ENCODE measurements at regions of chr5 and their contacts with region 1.

Region 1: GRCh38 chr5:17189381-17190036 is 27.9 kb upstream of the BASP1 start:
- DNase-seq: peak; percentile 70 to 75
- ATAC-seq: peak; percentile 51 to 86 (median 68)
- H3K4me3 ChIP-seq: no peak overlapping the region
- H3K27ac ChIP-seq: no peak overlapping the region
- H3K4me1 ChIP-seq: peaks cover 7 to 25% (median 13%) of the 10 kb centered on the region in 9 donors
- H3K27me3 ChIP-seq: peaks cover 0 to 4% (median 0%) of the 10 kb centered on the region in 7 donors
- CTCF ChIP-seq: peak; percentile 70 to 89 (median 84)

Region 2: GRCh38 chr5:16679863-16680262 is 509.6 kb before region 1 on chr5:
- intact Hi-C with region 1: loop called in 1 of 10 experiments (anchors 10 kb)
- DNase-seq: no peak
- ATAC-seq: no peak
- H3K4me3 ChIP-seq: no peak overlapping the region
- H3K27ac ChIP-seq: no peak overlapping the region
- H3K4me1 ChIP-seq: no peaks in the 10 kb centered on the region
- H3K27me3 ChIP-seq: no peaks in the 10 kb centered on the region
- CTCF ChIP-seq: no peak

Region 3: DNA sequence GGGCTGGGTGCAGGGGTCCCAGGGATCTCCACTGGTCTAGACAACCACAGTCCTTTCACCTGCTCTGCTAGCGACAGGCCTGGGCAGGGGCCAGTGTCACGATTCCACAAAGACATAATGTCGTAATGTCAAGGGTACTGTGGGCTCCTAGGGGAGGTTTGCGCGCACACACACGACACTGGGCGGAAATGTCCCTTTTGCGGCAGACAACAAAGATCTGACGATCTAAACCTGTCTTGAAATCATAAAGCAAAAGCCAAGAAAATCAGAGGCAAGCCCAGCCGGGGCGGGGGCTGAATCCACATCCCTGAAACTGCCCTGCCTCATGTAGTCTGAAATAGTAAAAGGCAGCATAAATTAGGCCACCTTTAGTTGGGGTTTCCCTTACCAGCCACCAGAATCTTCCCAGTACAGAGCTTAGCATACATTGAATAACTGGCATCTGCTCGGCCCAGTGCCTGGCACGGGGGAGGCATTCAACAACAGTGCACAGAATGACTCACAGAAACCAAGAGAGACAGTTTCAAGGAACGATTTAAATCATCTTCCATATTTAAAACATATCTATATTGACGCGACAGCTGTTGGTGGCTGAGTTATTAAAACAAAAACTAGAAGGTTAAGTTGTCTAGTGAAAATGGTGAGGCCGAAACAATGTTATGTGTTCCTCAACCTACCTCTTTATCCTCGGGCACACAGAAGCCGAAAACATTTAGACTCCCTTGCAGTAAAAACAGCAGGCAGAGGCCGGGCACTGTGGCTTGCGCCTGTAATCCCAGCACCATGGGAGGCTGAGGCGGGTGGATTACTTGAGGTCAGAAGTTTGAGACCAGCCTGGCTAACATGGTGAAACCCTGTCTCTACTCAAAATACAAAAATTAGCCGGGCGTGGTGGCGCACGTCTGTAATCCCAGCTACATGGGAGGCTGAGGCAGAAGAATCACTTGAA is 404.4 kb before region 1 on chr5:
- intact Hi-C with region 1: loop called in 6 of 10 experiments (anchors 2 to 5 kb)
- DNase-seq: no peak
- ATAC-seq: peak in 1 of 8 donors; percentile 22
- H3K4me3 ChIP-seq: no peak overlapping the region
- H3K27ac ChIP-seq: no peak overlapping the region
- H3K4me1 ChIP-seq: peaks cover 0 to 13% (median 0%) of the 10 kb centered on the region in 9 donors
- H3K27me3 ChIP-seq: no peaks in the 10 kb centered on the region
- CTCF ChIP-seq: no peak

Region 4: GRCh38 chr5:16871746-16872339 is 317.7 kb before region 1 on chr5:
- intact Hi-C with region 1: no loop called
- DNase-seq: no peak
- ATAC-seq: peak in 1 of 8 donors; percentile 19
- H3K4me3 ChIP-seq: no peak overlapping the region
- H3K27ac ChIP-seq: no peak overlapping the region
- H3K4me1 ChIP-seq: peaks cover 0 to 6% (median 4%) of the 10 kb centered on the region in 9 donors
- H3K27me3 ChIP-seq: no peaks in the 10 kb centered on the region
- CTCF ChIP-seq: no peak

Region 5: DNA sequence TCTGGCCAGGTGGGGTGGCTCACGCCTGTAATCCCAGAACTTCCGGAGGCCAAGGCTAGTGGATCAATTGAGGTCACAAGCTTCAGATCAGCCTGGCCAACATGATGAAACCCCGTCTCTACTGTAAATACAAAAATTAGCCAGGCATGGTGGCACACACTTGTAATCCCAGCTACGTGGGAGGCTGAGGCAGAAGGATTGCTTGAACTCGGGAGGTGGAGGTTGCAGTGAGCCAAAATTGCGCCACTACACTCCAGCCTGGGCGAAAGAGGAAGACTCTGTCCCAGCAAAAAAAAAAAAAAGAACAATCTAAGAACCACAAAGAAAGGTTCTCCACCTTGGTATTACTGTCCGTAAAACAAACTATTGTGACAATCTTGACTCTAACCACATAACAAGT is 263.1 kb before region 1 on chr5:
- intact Hi-C with region 1: loop called in 4 of 10 experiments (anchors 5 to 10 kb)
- DNase-seq: no peak
- ATAC-seq: no peak
- H3K4me3 ChIP-seq: no peak overlapping the region
- H3K27ac ChIP-seq: no peak overlapping the region
- H3K4me1 ChIP-seq: peaks cover 0 to 12% (median 4%) of the 10 kb centered on the region in 9 donors
- H3K27me3 ChIP-seq: peaks cover 0 to 11% (median 7%) of the 10 kb centered on the region in 7 donors
- CTCF ChIP-seq: no peak

Region 6: GRCh38 chr5:17132444-17133083 is 56.9 kb before region 1 on chr5:
- intact Hi-C with region 1: loop called in 1 of 10 experiments (anchors 5 kb)
- DNase-seq: no peak
- ATAC-seq: no peak
- H3K4me3 ChIP-seq: no peak overlapping the region
- H3K27ac ChIP-seq: no peak overlapping the region
- H3K4me1 ChIP-seq: peaks cover 0 to 20% (median 0%) of the 10 kb centered on the region in 9 donors
- H3K27me3 ChIP-seq: peaks cover 0 to 12% (median 0%) of the 10 kb centered on the region in 7 donors
- CTCF ChIP-seq: peak; percentile 56 to 80 (median 73)

Region 7: GRCh38 chr5:17238521-17239041 is 49.1 kb after region 1 on chr5:
- intact Hi-C with region 1: no loop called
- DNase-seq: no peak
- ATAC-seq: no peak
- H3K4me3 ChIP-seq: no peak overlapping the region
- H3K27ac ChIP-seq: no peak overlapping the region
- H3K4me1 ChIP-seq: peaks cover 0 to 25% (median 0%) of the 10 kb centered on the region in 9 donors
- H3K27me3 ChIP-seq: peaks cover 0 to 7% (median 0%) of the 10 kb centered on the region in 7 donors
- CTCF ChIP-seq: no peak

Region 8: GRCh38 chr5:17340816-17341215 is 151.3 kb after region 1 on chr5:
- intact Hi-C with region 1: no loop called
- DNase-seq: no peak
- ATAC-seq: no peak
- H3K4me3 ChIP-seq: no peak overlapping the region
- H3K27ac ChIP-seq: no peak overlapping the region
- H3K4me1 ChIP-seq: no peaks in the 10 kb centered on the region
- H3K27me3 ChIP-seq: peaks cover 0 to 7% (median 0%) of the 10 kb centered on the region in 7 donors
- CTCF ChIP-seq: no peak

Measured in heart right ventricle (tissue), 16 donors.